ENCODE measurements at regions of chr1 and their contacts with region 1.

Region 1: DNA sequence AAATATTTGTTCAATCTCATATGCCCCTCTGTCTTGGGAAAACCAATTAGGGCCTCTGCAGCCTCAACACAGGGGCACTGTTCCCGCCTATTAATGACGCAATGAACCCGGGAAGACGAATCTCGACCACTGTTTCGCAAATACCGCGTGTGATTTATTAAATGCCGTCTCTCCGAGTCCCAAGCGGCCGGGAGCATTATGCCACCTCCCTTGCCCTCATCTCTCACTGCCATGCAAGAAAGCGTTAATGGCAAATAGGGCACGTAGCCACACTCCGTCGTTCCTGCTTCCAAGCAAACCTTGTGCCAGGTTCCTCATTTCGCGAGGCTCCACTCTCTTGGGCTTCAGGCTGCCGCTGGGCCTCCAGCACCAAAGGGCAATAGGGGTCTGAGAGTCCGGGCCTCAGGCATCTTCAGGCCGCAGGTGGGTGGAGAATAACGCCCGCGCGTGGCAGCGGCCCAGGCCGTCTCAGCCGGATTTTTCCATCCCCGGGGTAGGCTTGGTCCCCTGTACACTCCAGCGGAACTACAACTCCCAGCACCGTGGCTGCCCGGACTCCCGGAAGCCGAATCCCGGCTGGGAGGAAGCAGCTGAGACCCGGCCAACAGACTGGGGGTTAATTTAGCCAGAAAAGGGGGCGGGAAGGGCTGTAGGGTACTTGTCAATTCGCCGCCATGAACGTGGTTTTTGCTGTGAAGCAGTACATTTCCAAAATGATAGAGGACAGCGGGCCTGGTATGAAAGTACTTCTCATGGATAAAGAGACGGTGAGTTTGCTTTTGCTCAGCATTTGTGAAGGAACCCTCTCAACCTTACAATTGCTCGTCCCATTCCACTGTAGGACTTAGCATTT is at the start of gene VPS45:
- DNase-seq: peak; percentile 85 to 91
- ATAC-seq: peak; percentile 94
- H3K4me3 ChIP-seq: peak within 1 kb of the TSS; percentile 72 to 91 (median 79)
- H3K27ac ChIP-seq: peak within 1 kb of the TSS; percentile 83 to 94 (median 89)
- H3K4me1 ChIP-seq: peaks cover 26% of the 10 kb centered on the region in 2 donors
- H3K27me3 ChIP-seq: no peaks in the 10 kb centered on the region
- CTCF ChIP-seq: peak in 2 of 5 experiments; percentile 9 to 34
- POLR2A ChIP-seq: peak; percentile 29 to 33
- total RNA-seq, gene VPS45: 17.0 to 30.3 (median 24.7) TPM

Region 2: DNA sequence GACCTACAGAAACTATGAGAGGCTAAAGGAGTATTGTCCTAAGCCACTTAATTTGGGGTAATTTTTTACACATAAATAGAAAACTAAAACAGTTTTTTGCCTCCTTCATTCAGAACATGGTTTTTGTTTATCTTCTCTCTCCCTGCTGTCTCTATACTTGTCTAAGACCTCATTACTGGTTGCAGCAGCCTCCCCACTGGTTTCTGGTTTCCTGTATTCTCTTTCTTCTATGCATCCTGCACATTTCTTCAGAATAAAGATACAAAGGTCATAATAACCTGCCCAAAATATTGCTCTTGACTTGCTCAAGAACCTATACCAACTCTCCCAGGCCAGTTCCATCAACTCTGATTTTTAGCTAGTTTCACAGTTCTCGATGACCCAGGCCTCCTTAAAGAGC is 187.9 kb before region 1 on chr1:
- in situ Hi-C with region 1: no loop called
- intact Hi-C with region 1: no loop called
- DNase-seq: no peak
- ATAC-seq: no peak
- H3K4me3 ChIP-seq: no peak overlapping the region
- H3K27ac ChIP-seq: no peak overlapping the region
- H3K4me1 ChIP-seq: peaks cover 23 to 24% of the 10 kb centered on the region in 2 donors
- H3K27me3 ChIP-seq: no peaks in the 10 kb centered on the region
- CTCF ChIP-seq: no peak
- POLR2A ChIP-seq: no peak

Region 3: DNA sequence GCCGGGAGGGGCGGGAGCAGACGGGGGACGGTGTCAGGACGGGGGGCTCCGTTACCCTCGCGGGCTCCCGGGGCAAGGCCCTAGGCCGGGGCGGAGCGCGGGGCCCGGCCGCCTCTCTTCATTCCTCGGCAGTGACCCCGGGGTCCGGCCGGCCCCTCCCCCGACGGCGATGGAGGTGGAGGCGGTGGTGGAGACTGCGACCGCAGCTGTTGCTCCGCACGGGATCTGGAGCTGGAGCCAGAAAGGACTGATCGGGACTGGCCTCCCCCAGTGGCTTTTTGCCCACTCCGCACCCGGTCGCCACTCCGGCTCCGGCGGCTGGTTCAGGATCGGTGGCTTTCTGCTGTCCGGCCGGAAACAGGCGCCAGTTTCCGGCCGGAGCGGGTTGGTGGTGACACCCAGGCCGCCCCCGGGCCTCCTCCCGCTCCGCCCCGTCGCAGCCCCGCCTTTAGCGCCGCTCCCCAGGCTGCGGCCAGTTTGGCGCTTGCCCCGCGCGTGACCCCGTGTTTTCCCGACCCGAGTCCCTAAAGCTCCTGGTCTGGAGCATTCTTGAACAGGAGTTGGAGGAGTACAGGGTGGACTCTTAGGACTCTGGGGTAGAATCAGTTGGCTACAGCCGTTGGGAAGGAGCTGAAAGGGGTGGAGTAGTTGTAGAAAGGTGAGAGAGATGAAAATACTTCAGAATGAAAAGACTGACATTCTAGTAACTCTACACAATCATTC is 56.9 kb before region 1 on chr1 and contains the start of gene OTUD7B:
- in situ Hi-C with region 1: no loop called
- intact Hi-C with region 1: loop called (anchors 5 kb)
- DNase-seq: peak; percentile 88 to 91
- ATAC-seq: peak; percentile 81 to 83
- H3K4me3 ChIP-seq: peak within 1 kb of the TSS; percentile 78 to 99 (median 88)
- H3K27ac ChIP-seq: peak within 1 kb of the TSS; percentile 93 to 100 (median 96)
- H3K4me1 ChIP-seq: peaks cover 34 to 43% of the 10 kb centered on the region in 2 donors
- H3K27me3 ChIP-seq: no peaks in the 10 kb centered on the region
- CTCF ChIP-seq: peak in 3 of 5 experiments; percentile 11 to 27 (median 25)
- POLR2A ChIP-seq: peak; percentile 88 to 90
- total RNA-seq, gene OTUD7B: 27.2 to 51.3 (median 43.6) TPM

Region 4: DNA sequence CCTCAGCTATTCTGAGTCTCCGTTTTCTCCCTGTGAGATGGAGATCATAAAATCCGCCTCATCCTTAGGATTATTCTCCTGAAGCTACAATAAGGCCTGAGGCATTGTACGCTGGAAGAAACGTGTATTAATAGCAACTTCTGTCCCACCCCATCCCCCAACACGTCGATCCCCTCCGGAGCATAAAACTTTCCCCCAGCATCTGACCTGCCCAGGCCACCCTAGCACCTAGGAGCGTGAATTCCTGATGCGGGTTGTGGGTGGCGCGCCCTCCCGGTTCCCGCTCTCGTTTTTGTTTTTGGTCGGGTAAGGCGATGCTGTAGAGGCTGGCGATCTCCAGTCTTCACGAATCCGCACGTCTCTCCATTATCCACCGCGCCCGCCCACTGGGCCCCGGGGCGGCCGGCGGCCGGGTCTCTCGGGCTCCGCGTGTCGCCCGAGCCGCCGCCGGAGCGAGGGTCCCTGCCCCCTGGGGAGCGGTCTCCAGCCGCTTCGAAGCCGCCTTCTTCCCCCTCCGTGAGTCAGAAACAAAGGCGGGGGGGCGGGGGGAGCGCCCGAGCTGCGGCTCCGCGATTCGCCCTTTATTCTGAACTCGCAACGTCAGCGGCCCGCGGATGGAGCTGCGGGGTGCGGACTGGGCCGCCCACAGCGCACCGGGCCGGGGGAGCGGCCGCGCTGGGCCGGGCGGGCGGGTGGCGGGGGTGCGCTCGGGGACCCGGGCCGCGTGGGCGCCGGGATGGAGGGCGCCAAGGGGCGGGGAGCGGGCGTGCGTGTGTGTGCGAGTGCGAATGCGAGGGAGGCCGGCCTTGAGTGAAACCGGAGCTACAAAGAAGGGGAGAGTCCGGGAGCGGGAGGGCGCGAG is 82.1 kb after region 1 on chr1 and contains the start of gene PLEKHO1:
- in situ Hi-C with region 1: no loop called
- intact Hi-C with region 1: loop called (anchors 5 kb)
- DNase-seq: peak; percentile 76 to 86
- ATAC-seq: peak; percentile 75 to 78
- H3K4me3 ChIP-seq: peak within 1 kb of the TSS; percentile 84 to 91 (median 86)
- H3K27ac ChIP-seq: peak within 1 kb of the TSS; percentile 90 to 94 (median 90)
- H3K4me1 ChIP-seq: peaks cover 24 to 50% of the 10 kb centered on the region in 2 donors
- H3K27me3 ChIP-seq: no peaks in the 10 kb centered on the region
- CTCF ChIP-seq: no peak
- POLR2A ChIP-seq: peak; percentile 94
- total RNA-seq, gene PLEKHO1: 24.3 to 57.7 (median 40.4) TPM